ENCODE measurements at regions of chr3 and their contacts with region 1.

Region 1: DNA sequence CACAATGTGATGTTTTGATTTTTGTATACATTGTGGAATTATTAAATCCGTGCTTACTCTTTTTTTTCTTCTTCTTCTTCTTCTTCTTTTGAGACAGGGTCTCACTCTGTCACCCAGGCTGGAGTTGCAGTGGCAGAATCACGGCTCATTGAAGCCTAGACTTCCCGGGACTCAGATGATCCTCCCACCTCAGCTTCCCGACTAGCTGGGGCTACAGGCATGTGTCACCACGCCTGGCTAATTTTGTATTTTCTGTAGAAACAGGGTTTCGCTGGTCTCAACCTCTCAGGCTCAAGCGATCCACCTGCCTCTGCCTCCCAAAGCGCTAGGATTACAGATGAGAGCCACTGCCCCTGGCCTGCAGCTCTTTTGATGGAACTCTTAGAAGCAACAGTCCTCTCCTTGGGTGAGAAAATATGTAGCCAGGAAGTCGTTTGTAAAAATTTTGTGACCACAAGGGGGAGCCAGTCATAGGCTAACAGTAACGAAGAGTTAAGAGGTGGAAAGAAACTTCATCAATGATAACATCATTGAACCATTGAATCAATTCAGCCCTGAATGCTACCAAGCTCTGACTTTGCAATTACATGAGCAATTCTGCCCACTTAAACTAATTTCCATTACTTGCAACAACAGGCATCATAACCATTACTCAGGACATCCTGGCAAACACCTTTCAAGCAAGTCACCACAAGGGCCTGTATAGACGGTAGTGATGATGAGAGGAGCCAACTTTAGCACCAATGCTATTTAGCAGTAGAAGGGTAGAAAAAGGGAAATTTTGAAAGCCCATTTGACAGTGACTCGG is 16.7 kb upstream of the CMTM7 start:
- DNase-seq: peak in 1 of 2 donors; percentile 80
- ATAC-seq: peak in 7 of 8 donors; percentile 44 to 79 (median 69)
- H3K4me3 ChIP-seq: no peak overlapping the region
- H3K27ac ChIP-seq: no peak overlapping the region
- H3K4me1 ChIP-seq: peaks cover 0 to 6% (median 0%) of the 10 kb centered on the region in 9 donors
- H3K27me3 ChIP-seq: no peaks in the 10 kb centered on the region
- CTCF ChIP-seq: peak; percentile 51 to 80 (median 69)

Region 2: GRCh38 chr3:31265646-31266428 is 1109.2 kb before region 1 on chr3:
- intact Hi-C with region 1: no loop called
- DNase-seq: no peak
- ATAC-seq: peak in 4 of 8 donors; percentile 65 to 78 (median 70)
- H3K4me3 ChIP-seq: no peak overlapping the region
- H3K27ac ChIP-seq: peak overlapping the region in 6 of 10 donors; percentile 1 to 56 (median 36)
- H3K4me1 ChIP-seq: peaks cover 0 to 14% (median 0%) of the 10 kb centered on the region in 9 donors
- H3K27me3 ChIP-seq: no peaks in the 10 kb centered on the region
- CTCF ChIP-seq: peak in 1 of 9 donors; percentile 16

Region 3: DNA sequence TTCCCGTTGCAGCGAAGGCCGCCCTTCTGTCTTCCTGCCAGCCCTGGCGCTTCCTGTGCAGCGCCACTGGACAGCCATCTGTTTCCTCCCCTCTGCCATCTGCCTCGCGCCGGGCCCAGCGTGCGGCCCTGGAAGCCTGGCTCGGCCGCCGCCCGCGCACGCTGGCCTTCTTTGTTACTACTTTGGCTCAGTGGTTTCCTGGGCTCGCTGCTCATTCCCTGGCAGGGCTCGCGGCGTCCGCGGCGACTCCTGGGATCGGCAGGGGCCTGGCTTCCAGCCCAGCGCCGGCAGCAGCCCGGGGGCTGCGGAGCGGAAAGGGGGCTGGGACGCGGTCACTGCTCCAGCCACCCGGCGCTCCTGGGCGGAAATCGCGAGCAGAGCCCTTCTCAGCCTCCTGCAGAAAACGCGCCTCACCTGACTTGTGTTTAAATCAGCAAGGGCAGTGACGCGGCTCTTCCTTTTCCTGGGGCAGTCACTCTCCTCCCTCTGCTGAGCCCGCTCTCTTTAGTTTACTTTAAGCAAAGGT is 26.6 kb after region 1 on chr3:
- intact Hi-C with region 1: loop called in 2 of 10 experiments (anchors 2 kb)
- DNase-seq: peak; percentile 83 to 85
- ATAC-seq: peak; percentile 85 to 93 (median 90)
- H3K4me3 ChIP-seq: peak overlapping the region; percentile 7 to 61 (median 54)
- H3K27ac ChIP-seq: peak overlapping the region; percentile 62 to 95 (median 86)
- H3K4me1 ChIP-seq: peaks cover 4 to 88% (median 34%) of the 10 kb centered on the region in 9 donors
- H3K27me3 ChIP-seq: no peaks in the 10 kb centered on the region
- CTCF ChIP-seq: peak in 2 of 9 donors; percentile 8 to 12

Region 4: DNA sequence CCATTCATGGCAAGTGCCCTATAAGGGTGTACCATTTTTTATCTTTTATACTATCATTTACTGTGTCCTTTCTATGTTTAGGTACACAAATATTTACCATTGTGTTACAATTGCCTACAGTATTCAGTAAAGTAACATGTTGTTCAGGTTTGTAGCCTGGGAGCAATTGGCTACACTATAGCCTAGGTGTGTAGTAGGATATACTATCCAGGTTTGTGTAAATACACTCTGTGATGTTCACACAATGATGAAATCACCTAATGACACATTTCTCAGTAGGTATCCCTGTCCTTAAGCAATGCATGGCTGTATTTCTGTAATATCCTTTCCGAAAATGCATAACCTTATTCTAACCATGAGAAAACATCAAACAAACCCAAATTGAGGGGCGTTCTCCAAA is 292.1 kb after region 1 on chr3:
- intact Hi-C with region 1: loop called in 1 of 10 experiments (anchors 5 kb)
- DNase-seq: no peak
- ATAC-seq: no peak
- H3K4me3 ChIP-seq: no peak overlapping the region
- H3K27ac ChIP-seq: no peak overlapping the region
- H3K4me1 ChIP-seq: no peaks in the 10 kb centered on the region
- H3K27me3 ChIP-seq: peaks cover 0 to 6% (median 0%) of the 10 kb centered on the region in 7 donors
- CTCF ChIP-seq: no peak